Keratinocyte (primary cell): ENCODE measurements at regions of chr2 and their contacts with region 1.

Region 1: GRCh38 chr2:28927878-28928277 is 33.4 kb downstream of the WDR43 start:
- DNase-seq: peak; percentile 79
- H3K4me3 ChIP-seq: no peak overlapping the region
- H3K27ac ChIP-seq: peak overlapping the region; percentile 85
- H3K4me1 ChIP-seq: peaks cover 41% of the 10 kb centered on the region
- H3K27me3 ChIP-seq: no peaks in the 10 kb centered on the region
- CTCF ChIP-seq: no peak

Region 2: DNA sequence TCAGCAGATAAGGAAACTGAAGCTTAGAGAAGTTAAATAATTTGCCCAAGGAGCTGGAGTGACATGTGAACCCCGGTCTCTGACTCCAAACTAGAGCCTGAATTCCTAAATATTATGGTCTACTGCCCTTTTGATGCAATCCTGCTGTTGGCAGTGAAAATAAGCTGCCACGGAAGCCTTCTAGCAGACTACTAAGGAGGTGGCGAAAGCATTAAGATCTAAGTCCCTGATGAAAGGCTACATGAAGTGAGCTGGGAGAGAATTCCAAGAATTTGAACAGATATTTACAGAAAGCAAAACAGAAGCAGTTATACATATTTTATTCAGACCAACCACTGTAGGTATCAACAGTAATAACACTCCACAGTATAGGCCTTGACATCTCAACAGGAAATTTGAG is 85.8 kb before region 1 on chr2:
- dilution Hi-C with region 1: loop called (anchors 5 kb)
- DNase-seq: no peak
- H3K4me3 ChIP-seq: no peak overlapping the region
- H3K27ac ChIP-seq: no peak overlapping the region
- H3K4me1 ChIP-seq: no peaks in the 10 kb centered on the region
- H3K27me3 ChIP-seq: no peaks in the 10 kb centered on the region
- CTCF ChIP-seq: no peak